GM13977 (cell line): ENCODE measurements at regions of chr3 and their contacts with region 1.

Region 1: DNA sequence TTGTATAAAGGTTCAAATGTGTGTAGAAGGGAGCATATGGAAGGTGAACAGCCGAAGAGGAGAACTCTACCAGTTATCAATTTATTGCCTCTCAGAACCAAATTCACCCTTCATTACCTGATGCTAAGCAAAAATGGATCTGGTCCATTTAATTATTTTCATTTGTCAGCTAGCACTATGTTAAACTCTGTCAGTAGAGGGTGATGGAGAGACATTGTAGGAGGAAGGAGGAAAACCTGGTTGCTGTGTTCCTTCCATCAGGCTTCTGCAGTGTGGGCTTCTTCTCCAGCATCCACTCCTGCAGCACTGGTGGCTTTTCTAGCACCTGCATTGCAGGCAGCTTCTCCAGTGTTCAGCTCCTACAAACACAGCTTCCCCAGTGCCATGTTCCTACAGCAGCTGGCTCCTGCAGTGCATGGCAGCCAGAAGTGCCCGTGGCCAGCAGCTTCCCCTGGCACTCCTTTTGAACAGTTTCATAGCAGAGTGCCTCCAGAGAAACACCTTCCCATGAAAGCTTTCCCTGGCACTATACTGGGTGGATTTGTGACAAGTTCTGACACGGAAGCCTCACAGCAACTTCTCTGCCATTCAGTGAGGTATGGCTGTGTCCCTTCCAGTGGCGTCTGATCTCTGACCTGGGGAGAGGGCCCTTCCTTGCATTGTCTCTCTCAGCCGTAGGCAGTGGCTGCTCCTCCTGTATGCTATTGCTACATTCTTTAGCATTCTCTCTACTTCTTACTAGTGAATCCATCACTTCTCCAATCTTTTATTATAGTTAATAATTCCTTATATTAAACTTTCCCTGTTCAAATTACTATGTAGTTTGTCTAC is 14.6 kb upstream of the IL17RD start:
- DNase-seq: no peak
- CTCF ChIP-seq: peak; percentile 60

Region 2: GRCh38 chr3:57555738-57556458 is 376.1 kb after region 1 on chr3 and contains the start of gene PDE12:
- in situ Hi-C with region 1: loop called (anchors 25 kb)
- DNase-seq: peak; percentile 85
- CTCF ChIP-seq: no peak